ENCODE measurements at regions of chr9 and their contacts with region 1.

Region 1: GRCh38 chr9:26892251-26893029 is at the start of gene CAAP1:
- DNase-seq: peak; percentile 86 to 95 (median 88)
- H3K4me3 ChIP-seq: peak within 1 kb of the TSS; percentile 93
- H3K4me3 Mint-ChIP-seq: peak within 1 kb of the TSS; percentile 95 to 100 (median 100)
- H3K27ac ChIP-seq: peak within 1 kb of the TSS; percentile 98
- H3K27ac Mint-ChIP-seq: peak within 1 kb of the TSS; percentile 95 to 100 (median 100)
- H3K4me1 ChIP-seq: peaks cover 31% of the 10 kb centered on the region
- H3K4me1 Mint-ChIP-seq: peaks cover 34 to 51% (median 51%) of the 10 kb centered on the region in 3 donors
- H3K27me3 ChIP-seq: no peaks in the 10 kb centered on the region
- H3K27me3 Mint-ChIP-seq: peaks cover 0 to 3% of the 10 kb centered on the region in 2 donors
- total RNA-seq, gene CAAP1: 19.4 to 21.0 TPM

Region 2: DNA sequence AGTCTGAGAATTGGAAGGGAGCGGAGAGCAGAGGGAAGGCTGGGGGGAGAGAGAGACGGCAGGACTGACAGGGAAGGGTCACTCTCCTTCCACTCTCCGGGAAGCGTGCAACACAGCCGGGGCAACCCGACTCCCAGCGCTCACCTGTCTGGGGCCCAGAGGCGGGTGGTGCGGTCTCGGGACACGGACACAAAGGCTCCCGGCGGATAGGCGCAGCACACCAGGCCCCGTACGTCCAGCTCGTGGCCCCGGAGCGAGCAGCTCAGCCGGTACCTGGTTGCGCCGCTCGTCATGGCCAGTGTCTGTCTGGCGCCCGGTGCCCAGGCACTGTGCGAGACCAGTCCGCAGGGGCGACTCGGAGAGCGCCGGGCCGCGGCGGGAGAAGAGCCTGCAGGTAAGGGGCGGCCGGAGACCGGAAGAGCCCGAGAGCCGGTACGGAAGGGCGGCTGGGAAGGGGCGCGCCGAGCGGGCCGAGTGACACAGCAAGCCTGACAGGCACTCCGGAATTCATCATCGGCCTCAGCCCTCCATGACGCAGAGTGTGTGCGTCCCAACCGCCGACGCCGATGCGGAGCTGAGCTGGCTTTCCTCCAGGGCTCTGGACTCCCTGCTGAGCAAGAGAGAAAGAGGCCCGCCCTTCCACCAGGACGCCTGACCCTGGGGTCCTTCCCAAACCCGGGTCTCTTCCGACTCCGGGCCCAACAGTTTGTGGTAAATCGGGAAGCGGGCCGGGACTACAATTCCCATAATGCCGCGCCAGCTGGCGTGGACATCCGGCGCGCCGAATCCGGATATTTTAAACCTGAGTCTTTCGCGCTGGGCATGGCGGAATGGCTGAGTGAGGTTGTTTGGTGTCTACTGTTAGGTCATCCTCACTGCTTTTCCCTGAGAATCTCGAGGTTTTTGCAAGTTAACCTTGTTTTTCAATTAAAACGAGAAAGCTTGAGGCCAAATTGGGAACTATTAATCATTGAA is 54.6 kb after region 1 on chr9 and contains the start of gene PLAA:
- CTCF ChIA-PET with region 1: interaction called, 5 read pairs
- POLR2A ChIA-PET with region 1: interaction called, 11 read pairs
- DNase-seq: peak; percentile 76 to 91 (median 90)
- H3K4me3 ChIP-seq: peak within 1 kb of the TSS; percentile 83
- H3K4me3 Mint-ChIP-seq: peak within 1 kb of the TSS; percentile 93 to 99 (median 95)
- H3K27ac ChIP-seq: peak within 1 kb of the TSS; percentile 93
- H3K27ac Mint-ChIP-seq: peak within 1 kb of the TSS; percentile 97 to 100 (median 100)
- H3K4me1 ChIP-seq: peaks cover 34% of the 10 kb centered on the region
- H3K4me1 Mint-ChIP-seq: peaks cover 42 to 58% (median 57%) of the 10 kb centered on the region in 3 donors
- H3K27me3 ChIP-seq: no peaks in the 10 kb centered on the region
- H3K27me3 Mint-ChIP-seq: peaks cover 1 to 10% of the 10 kb centered on the region in 2 donors
- total RNA-seq, gene PLAA: 39.2 to 41.8 TPM

Region 3: GRCh38 chr9:26955921-26956859 is 63.8 kb after region 1 on chr9 and contains the start of gene IFT74:
- CTCF ChIA-PET with region 1: interaction called, 15 read pairs
- POLR2A ChIA-PET with region 1: interaction called, 6 read pairs
- DNase-seq: peak; percentile 88 to 97 (median 93)
- H3K4me3 ChIP-seq: peak within 1 kb of the TSS; percentile 83
- H3K4me3 Mint-ChIP-seq: peak within 1 kb of the TSS; percentile 89 to 97 (median 93)
- H3K27ac ChIP-seq: peak within 1 kb of the TSS; percentile 71
- H3K27ac Mint-ChIP-seq: peak within 1 kb of the TSS; percentile 91 to 97 (median 96)
- H3K4me1 ChIP-seq: peaks cover 16% of the 10 kb centered on the region
- H3K4me1 Mint-ChIP-seq: peaks cover 25 to 36% (median 35%) of the 10 kb centered on the region in 3 donors
- H3K27me3 ChIP-seq: no peaks in the 10 kb centered on the region
- H3K27me3 Mint-ChIP-seq: peaks cover 0 to 2% of the 10 kb centered on the region in 2 donors
- total RNA-seq, gene IFT74: 10.4 TPM